Activated naive CD8-positive, alpha-beta T cell treated with anti-CD3 and anti-CD28 coated beads, Interleukin-2, amount 10 ng/mL, durations not matched to agents 7 days and 5 days (primary cell): ENCODE measurements at regions of chr4 and their contacts with region 1.

Region 1: GRCh38 chr4:53377319-53378170 is at the start of gene FIP1L1:
- DNase-seq: peak; percentile 98
- ATAC-seq: peak; percentile 96
- H3K4me3 Mint-ChIP-seq: peak within 1 kb of the TSS; percentile 96
- H3K27ac Mint-ChIP-seq: peak within 1 kb of the TSS; percentile 93
- H3K4me1 Mint-ChIP-seq: peaks cover 23% of the 10 kb centered on the region
- H3K27me3 Mint-ChIP-seq: peaks cover 2% of the 10 kb centered on the region
- total RNA-seq, gene FIP1L1: 75.9 to 78.2 TPM

Region 2: GRCh38 chr4:53365486-53366300 is 11.9 kb before region 1 on chr4 and contains the start of gene SCFD2:
- POLR2A ChIA-PET with region 1: interaction called, 15 read pairs
- DNase-seq: peak; percentile 92
- ATAC-seq: peak; percentile 99
- H3K4me3 Mint-ChIP-seq: peak within 1 kb of the TSS; percentile 97
- H3K27ac Mint-ChIP-seq: peak within 1 kb of the TSS; percentile 90
- H3K4me1 Mint-ChIP-seq: peaks cover 43% of the 10 kb centered on the region
- H3K27me3 Mint-ChIP-seq: peaks cover 8% of the 10 kb centered on the region
- total RNA-seq, gene SCFD2: 18.1 to 22.9 TPM